Activated T-helper 2 cell treated with anti-CD3 and anti-CD28 coated beads, Interferon-gamma antibody, Interleukin-2, Interleukin-4, amounts not matched to agents 10 μg/mL and 5 μg/mL and 100 μg/mL, durations not matched to agents 14 hours and 24 hours and 36 hours (primary cell): ENCODE measurements at regions of chr9 and their contacts with region 1.

Region 1: DNA sequence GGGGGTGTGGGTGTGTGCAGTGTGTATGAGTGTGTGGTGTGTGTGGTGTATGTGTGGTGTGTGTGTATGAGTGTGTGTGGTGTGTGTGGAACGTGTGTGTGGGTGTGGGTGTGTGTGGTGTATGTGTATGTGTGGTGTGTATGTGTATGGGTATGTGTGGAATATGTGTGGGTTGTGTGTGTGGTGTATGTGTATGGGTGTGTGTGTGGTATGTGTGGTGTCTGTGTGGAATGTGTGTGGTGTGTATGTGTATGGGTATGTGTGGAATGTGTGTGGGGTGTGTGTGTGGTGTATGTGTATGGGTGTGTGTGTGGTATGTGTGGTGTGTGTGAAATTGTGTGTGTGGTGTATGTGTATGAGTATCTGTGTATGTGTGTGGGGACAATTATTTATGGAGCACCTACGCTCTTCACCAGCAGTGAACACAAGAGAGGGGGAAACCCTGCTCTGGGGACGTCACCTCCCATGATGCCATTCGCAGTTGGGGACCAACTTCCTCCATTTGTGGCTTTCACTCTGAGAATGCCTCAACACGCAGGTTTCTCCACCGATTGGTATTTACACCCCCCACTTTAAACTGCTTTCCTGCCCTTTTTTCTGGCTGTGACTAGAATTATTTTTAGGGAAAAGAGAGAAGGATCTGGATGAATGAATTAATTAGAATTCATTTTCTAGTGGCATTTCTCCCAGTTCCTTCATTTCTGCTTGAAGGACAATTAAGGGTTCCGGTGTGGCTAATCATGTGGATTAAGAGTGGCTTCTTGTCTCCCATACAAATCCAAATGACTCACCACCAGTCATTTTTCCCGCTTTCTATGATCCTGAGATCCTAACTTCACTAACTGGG is 238.1 kb downstream of the ROR2 start:
- DNase-seq: peak; percentile 72
- H3K4me3 Mint-ChIP-seq: no peak overlapping the region
- H3K27ac Mint-ChIP-seq: no peak overlapping the region
- H3K4me1 Mint-ChIP-seq: peaks cover 18% of the 10 kb centered on the region
- H3K27me3 Mint-ChIP-seq: peaks cover 8% of the 10 kb centered on the region

Region 2: GRCh38 chr9:91036826-91037510 is 675.0 kb before region 1 on chr9:
- intact Hi-C with region 1: loop called (anchors 10 kb)
- DNase-seq: peak; percentile 79
- H3K4me3 Mint-ChIP-seq: peak overlapping the region; percentile 49
- H3K27ac Mint-ChIP-seq: peak overlapping the region; percentile 88
- H3K4me1 Mint-ChIP-seq: peaks cover 61% of the 10 kb centered on the region
- H3K27me3 Mint-ChIP-seq: no peaks in the 10 kb centered on the region

Region 3: GRCh38 chr9:91415290-91415689 is 296.7 kb before region 1 on chr9:
- intact Hi-C with region 1: no loop called
- DNase-seq: no peak
- H3K4me3 Mint-ChIP-seq: peak overlapping the region; percentile 47
- H3K27ac Mint-ChIP-seq: peak overlapping the region; percentile 98
- H3K4me1 Mint-ChIP-seq: peaks cover 80% of the 10 kb centered on the region
- H3K27me3 Mint-ChIP-seq: no peaks in the 10 kb centered on the region